ENCODE measurements at regions of chr21 and their contacts with region 1.

Region 1: GRCh38 chr21:44761011-44761729 is 40.5 kb downstream of the UBE2G2 start:
- DNase-seq: no peak
- H3K4me3 ChIP-seq: no peak overlapping the region
- H3K27ac ChIP-seq: no peak overlapping the region
- H3K27me3 ChIP-seq: no peaks in the 10 kb centered on the region
- CTCF ChIP-seq: no peak

Region 2: DNA sequence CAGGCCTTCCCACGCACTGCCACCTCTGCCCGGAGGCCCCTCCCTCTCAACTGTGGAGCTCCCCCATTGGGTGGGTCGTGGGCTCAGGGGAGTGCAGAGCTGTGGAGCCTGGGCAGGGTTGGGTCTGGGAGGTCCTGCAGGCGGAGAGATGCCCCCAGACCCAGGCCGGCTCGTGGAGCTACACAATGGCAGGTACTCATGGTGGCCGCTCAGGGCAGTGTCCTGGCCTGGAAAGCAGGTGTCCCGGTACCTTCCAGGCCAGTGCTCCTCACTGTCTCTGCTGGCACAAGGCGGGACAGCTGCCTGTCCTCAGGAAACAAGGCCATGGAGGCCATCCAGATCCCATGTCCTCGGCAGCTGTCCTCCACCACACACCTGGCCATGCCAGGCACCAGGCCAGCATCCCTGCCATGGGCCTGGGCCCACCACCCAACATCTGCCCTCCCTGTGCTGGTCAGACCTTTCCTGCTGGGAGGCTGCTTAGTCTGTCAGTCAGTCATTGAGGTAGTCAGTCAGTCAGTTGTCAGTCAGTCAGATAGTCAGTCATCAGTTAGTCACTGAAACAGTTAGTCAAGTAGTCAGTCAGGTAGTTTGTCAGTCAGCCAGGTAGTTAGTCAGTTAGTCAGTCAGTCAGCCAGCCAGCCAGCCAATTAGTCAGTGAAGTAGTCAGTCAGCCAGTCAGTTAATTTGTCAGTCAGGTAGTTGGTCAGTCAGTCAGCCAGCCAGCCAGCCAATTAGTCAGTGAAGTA is 238.5 kb before region 1 on chr21:
- intact Hi-C with region 1: loop called in 1 of 2 experiments (anchors 10 kb)
- DNase-seq: peak in 7 of 10 donors; percentile 2 to 33 (median 22)
- H3K4me3 ChIP-seq: no peak overlapping the region
- H3K27ac ChIP-seq: no peak overlapping the region
- H3K27me3 ChIP-seq: peaks cover 0 to 16% (median 0%) of the 10 kb centered on the region in 45 donors
- CTCF ChIP-seq: no peak

Measured in dorsolateral prefrontal cortex (tissue), 120 donors.